HCT116 (cell line): ENCODE measurements at regions of chr1 and their contacts with region 1.

Region 1: GRCh38 chr1:160951443-160952128 is 3.0 kb downstream of the ITLN2 start:
- DNase-seq: peak; percentile 27
- ATAC-seq: peak; percentile 81
- H3K4me3 ChIP-seq: no peak overlapping the region
- H3K27ac ChIP-seq: no peak overlapping the region
- H3K4me1 ChIP-seq: peaks cover 0 to 8% of the 10 kb centered on the region in 2 experiments; a peak in 2 of 4 replicates
- H3K27me3 ChIP-seq: no peaks in the 10 kb centered on the region
- CTCF ChIP-seq: peak; percentile 79 to 85 (median 82)
- POLR2A ChIP-seq: no peak
- RAD21 ChIP-seq: peak; percentile 76

Region 2: GRCh38 chr1:160428655-160429054 is 522.9 kb before region 1 on chr1:
- CTCF ChIA-PET with region 1: interaction called, 3 read pairs
- POLR2A ChIA-PET with region 1: no interaction called
- RAD21 ChIA-PET with region 1: interaction called in 1 of 2 experiments, 3 read pairs
- intact Hi-C with region 1: loop called (anchors 5 kb)
- DNase-seq: peak; percentile 16
- ATAC-seq: peak; percentile 88
- H3K4me3 ChIP-seq: no peak overlapping the region
- H3K27ac ChIP-seq: no peak overlapping the region
- H3K4me1 ChIP-seq: peaks cover 0 to 4% of the 10 kb centered on the region in 2 experiments; a peak in 1 of 4 replicates
- H3K27me3 ChIP-seq: no peaks in the 10 kb centered on the region
- CTCF ChIP-seq: peak; percentile 58 to 91 (median 75)
- POLR2A ChIP-seq: no peak
- RAD21 ChIP-seq: peak; percentile 94

Region 3: DNA sequence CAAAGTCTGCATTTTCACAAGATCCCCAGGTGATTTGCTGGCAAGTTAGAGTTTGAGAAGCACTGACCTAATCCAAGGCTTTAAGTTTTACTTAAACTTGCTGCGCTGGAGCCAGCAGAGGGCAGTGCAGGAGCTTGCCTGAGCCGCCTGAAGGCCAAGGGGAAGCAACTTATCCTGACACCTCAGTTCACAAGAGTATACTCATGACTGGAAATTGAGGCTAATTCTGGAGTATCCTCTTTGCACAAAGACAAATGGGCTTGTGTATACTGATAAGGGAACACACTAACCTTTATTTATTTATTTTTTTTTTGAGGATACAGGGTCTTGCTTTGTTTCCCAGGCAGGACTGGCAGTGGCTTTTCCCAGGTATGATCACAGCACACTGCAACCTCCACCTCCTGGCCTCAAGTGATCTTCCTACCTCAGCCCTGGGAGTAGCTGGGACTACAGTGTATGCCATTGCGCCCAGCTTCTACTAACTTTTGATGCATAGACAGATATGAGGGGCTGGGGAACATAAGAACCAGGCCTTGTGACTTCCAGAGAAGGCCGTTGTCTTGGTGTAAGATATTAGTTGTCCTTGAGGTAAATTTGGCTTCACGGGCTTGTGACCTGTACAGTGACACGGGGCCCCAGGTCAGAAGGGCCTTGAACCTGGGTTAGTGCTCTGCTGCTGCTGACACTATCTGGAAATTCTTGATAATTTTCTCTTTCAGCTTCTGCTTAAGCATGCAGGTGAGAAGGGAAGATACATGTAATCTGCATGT is 275.8 kb before region 1 on chr1:
- CTCF ChIA-PET with region 1: interaction called, 16 read pairs
- POLR2A ChIA-PET with region 1: no interaction called
- RAD21 ChIA-PET with region 1: no interaction called
- intact Hi-C with region 1: no loop called
- DNase-seq: peak; percentile 57
- ATAC-seq: peak; percentile 98
- H3K4me3 ChIP-seq: no peak overlapping the region
- H3K27ac ChIP-seq: no peak overlapping the region
- H3K4me1 ChIP-seq: peaks cover 0 to 8% of the 10 kb centered on the region in 2 experiments; a peak in 2 of 4 replicates
- H3K27me3 ChIP-seq: no peaks in the 10 kb centered on the region
- CTCF ChIP-seq: peak; percentile 72 to 93 (median 91)
- POLR2A ChIP-seq: no peak
- RAD21 ChIP-seq: peak; percentile 73

Region 4: DNA sequence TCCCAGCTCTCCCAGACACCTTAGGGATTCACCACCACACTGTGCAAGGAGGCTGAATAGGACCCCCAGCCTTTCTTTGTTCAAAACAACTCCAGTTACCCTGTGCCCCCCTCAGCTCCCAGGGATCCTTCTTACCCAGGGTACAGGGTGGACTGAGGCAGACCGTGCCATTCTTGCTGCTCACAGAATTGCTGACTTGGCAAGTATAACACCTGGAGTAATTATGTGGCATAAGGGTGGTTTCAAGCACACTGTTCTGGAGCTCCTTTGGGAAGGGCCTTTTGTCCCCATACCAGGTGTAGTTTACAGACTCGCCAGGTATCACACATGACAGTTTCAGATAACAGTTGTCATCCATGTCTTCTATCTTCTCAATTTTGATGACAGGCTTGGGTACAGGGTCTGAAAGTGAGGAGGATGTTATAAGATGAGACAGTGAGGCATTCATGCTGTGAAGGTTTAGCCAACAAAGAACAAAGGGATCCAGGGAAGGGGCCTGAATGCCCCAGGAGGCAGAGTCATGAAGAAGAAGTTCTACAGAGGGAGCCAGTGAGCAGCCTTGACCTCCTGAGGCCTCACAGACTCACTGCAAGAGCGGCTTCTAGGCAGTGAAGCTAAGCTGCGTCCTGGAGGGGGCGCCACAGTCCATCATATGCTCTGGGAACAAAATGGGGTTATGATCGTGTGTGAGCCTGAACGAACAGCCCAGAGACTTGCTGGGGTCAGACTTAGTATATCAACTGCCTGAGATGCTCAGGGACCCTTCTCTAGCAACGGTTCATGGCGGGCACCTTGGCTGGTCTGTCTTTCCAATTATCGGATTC is 270.3 kb before region 1 on chr1:
- CTCF ChIA-PET with region 1: interaction called, 16 read pairs
- POLR2A ChIA-PET with region 1: no interaction called
- RAD21 ChIA-PET with region 1: interaction called in 1 of 2 experiments, 3 read pairs
- intact Hi-C with region 1: loop called (anchors 2 kb)
- DNase-seq: peak; percentile 78
- ATAC-seq: peak; percentile 99
- H3K4me3 ChIP-seq: no peak overlapping the region
- H3K27ac ChIP-seq: no peak overlapping the region
- H3K4me1 ChIP-seq: no peaks in the 10 kb centered on the region
- H3K27me3 ChIP-seq: no peaks in the 10 kb centered on the region
- CTCF ChIP-seq: peak; percentile 88 to 98 (median 95)
- POLR2A ChIP-seq: no peak
- RAD21 ChIP-seq: peak; percentile 89

Region 5: GRCh38 chr1:160726498-160727315 is 224.9 kb before region 1 on chr1:
- CTCF ChIA-PET with region 1: interaction called, 46 read pairs
- POLR2A ChIA-PET with region 1: interaction called, 3 read pairs
- RAD21 ChIA-PET with region 1: interaction called in 1 of 2 experiments, 3 read pairs
- intact Hi-C with region 1: loop called (anchors 1 kb)
- DNase-seq: peak; percentile 75
- ATAC-seq: peak; percentile 95
- H3K4me3 ChIP-seq: no peak overlapping the region
- H3K27ac ChIP-seq: 0 out of 2 replicates have a peak overlapping the region, but pooled peaks have one; percentile 11
- H3K4me1 ChIP-seq: peaks cover 6 to 14% of the 10 kb centered on the region in 2 experiments; a peak in 3 of 4 replicates
- H3K27me3 ChIP-seq: no peaks in the 10 kb centered on the region
- CTCF ChIP-seq: peak; percentile 88 to 95 (median 94)
- POLR2A ChIP-seq: no peak
- RAD21 ChIP-seq: peak; percentile 93

Region 6: GRCh38 chr1:160777486-160778089 is 174.0 kb before region 1 on chr1:
- CTCF ChIA-PET with region 1: interaction called, 29 read pairs
- POLR2A ChIA-PET with region 1: no interaction called
- RAD21 ChIA-PET with region 1: no interaction called
- intact Hi-C with region 1: loop called (anchors 5 kb)
- DNase-seq: peak; percentile 29
- ATAC-seq: peak; percentile 73
- H3K4me3 ChIP-seq: no peak overlapping the region
- H3K27ac ChIP-seq: no peak overlapping the region
- H3K4me1 ChIP-seq: peaks cover 9 to 10% of the 10 kb centered on the region in 2 experiments; a peak in 2 of 4 replicates
- H3K27me3 ChIP-seq: no peaks in the 10 kb centered on the region
- CTCF ChIP-seq: peak; percentile 60 to 74 (median 74)
- POLR2A ChIP-seq: no peak
- RAD21 ChIP-seq: peak; percentile 58

Region 7: GRCh38 chr1:160837558-160838205 is 113.9 kb before region 1 on chr1:
- CTCF ChIA-PET with region 1: interaction called, 45 read pairs
- POLR2A ChIA-PET with region 1: interaction called, 3 read pairs
- RAD21 ChIA-PET with region 1: interaction called, 3 read pairs
- intact Hi-C with region 1: loop called (anchors 1 kb)
- DNase-seq: peak; percentile 12
- ATAC-seq: peak; percentile 76
- H3K4me3 ChIP-seq: no peak overlapping the region
- H3K27ac ChIP-seq: no peak overlapping the region
- H3K4me1 ChIP-seq: 0 out of 4 replicates have a peak, but pooled peaks cover 0 to 3% of the 10 kb centered on the region in 2 experiments
- H3K27me3 ChIP-seq: peaks cover 5% of the 10 kb centered on the region; the same call in 1 of the 2 replicates
- CTCF ChIP-seq: no peak
- POLR2A ChIP-seq: no peak
- RAD21 ChIP-seq: no peak

Region 8: GRCh38 chr1:161038523-161039153 is 87.1 kb after region 1 on chr1 and contains the start of gene TSTD1:
- CTCF ChIA-PET with region 1: no interaction called
- POLR2A ChIA-PET with region 1: no interaction called
- RAD21 ChIA-PET with region 1: no interaction called
- intact Hi-C with region 1: no loop called
- DNase-seq: no peak
- ATAC-seq: peak; percentile 83
- H3K4me3 ChIP-seq: peak within 1 kb of the TSS; percentile 76 to 88
- H3K27ac ChIP-seq: peak within 1 kb of the TSS; percentile 88
- H3K4me1 ChIP-seq: peaks cover 14 to 32% of the 10 kb centered on the region in 2 experiments
- H3K27me3 ChIP-seq: no peaks in the 10 kb centered on the region
- CTCF ChIP-seq: no peak
- POLR2A ChIP-seq: peak; percentile 57
- RAD21 ChIP-seq: no peak
- total RNA-seq, gene TSTD1: 116 TPM